ENCODE measurements at regions of chr5 and their contacts with region 1.

Region 1: DNA sequence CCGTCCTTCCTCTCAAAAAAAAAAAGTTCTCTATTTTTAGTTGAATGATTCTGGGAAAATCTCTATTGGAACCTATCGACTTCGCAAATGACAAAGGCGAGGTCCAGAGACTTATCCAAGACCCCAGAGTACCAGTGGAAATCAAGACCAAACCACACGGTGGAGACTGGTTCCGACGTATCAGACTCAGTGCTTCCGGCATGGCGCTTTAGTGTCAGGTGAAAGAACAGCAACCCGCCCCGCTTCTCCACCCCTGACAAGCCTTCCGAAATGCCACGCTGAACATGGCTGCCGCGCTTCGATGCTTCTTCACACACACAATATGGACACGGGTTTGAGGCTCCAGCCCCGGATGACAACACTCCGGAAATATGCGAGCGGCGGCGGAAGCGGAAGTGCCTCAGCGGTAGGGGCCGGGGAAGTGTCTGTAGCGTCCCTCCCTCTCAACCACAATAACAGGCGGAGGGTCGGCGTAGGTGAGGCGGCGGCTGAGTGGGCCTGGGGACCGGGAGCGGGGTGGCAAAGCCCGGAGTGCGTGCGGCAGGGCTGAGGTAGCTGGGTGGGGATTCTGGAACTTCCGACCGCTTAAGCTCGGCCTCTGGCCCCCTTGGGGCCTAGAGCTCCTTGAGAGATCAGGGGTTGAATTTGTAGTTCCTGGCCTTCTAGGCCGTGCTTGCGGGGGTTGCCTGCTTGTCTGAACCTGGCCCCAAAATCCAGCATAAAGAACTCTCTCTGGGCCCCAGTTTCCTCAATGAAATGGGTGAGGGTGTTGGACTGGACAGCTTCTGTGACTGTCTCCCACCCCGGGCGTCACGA is at the start of gene FBXO38:
- DNase-seq: peak; percentile 98
- ATAC-seq: peak; percentile 97
- H3K4me3 Mint-ChIP-seq: peak within 1 kb of the TSS; percentile 94
- H3K27ac Mint-ChIP-seq: peak within 1 kb of the TSS; percentile 99
- H3K4me1 Mint-ChIP-seq: peaks cover 56% of the 10 kb centered on the region
- H3K27me3 Mint-ChIP-seq: no peaks in the 10 kb centered on the region
- total RNA-seq, gene FBXO38: 47.5 to 65.4 TPM

Region 2: DNA sequence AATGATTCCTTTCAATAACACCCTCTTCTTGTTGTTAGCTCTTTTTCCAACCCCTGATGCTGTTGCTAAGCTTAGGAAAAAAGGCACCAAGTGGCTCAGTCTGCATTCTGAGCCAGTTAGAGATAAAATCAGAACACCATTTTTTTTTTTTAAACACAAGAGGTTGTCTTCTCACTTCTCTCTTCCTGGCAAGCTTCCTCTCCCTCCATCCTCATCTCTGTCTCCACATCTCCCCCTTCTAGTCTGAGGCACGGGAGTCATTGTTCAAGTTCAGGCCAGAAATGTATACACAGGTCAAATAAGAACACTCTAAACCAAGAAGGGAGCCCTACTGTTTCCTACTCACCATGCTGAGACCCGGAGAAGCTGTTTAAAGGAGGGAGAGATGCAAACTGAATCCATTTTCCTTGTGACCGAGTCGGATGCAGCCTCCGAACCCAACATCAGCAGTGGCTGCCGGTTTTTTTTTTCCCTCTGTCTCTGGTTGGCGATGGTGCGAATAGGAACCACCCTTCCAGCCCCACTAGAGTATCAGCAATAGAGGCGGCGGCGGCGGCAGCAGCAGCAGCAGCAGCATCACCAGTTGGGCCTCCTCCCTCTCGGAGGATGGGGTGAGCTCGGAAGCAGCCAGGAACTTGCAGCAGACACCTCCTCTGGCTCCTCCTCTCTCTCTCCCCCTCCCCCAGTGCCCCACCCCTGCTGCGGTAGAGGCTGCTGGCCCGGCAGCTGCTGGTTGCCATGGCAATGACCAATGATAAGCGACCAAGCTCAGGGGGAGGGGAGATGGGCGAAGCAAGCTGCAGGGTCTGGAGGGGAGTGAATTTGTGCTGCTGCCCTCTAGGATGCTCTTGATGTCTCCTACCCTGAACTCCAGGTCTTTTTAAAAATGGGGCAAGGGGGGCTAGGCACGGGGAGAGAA is 601.4 kb before region 1 on chr5 and contains the start of gene JAKMIP2:
- CTCF ChIA-PET with region 1: no interaction called
- POLR2A ChIA-PET with region 1: no interaction called
- intact Hi-C with region 1: loop called in 1 of 2 experiments (anchors 1 kb)
- DNase-seq: peak; percentile 93
- ATAC-seq: peak; percentile 98
- H3K4me3 Mint-ChIP-seq: peak within 1 kb of the TSS; percentile 79
- H3K27ac Mint-ChIP-seq: peak within 1 kb of the TSS; percentile 82
- H3K4me1 Mint-ChIP-seq: peaks cover 14% of the 10 kb centered on the region
- H3K27me3 Mint-ChIP-seq: no peaks in the 10 kb centered on the region
- total RNA-seq, gene JAKMIP2: 3.4 to 3.9 TPM

Region 3: GRCh38 chr5:148364343-148364742 is 19.4 kb before region 1 on chr5:
- CTCF ChIA-PET with region 1: no interaction called
- POLR2A ChIA-PET with region 1: no interaction called
- intact Hi-C with region 1: no loop called
- DNase-seq: no peak
- ATAC-seq: no peak
- H3K4me3 Mint-ChIP-seq: no peak overlapping the region
- H3K27ac Mint-ChIP-seq: no peak overlapping the region
- H3K4me1 Mint-ChIP-seq: no peaks in the 10 kb centered on the region
- H3K27me3 Mint-ChIP-seq: peaks cover 2% of the 10 kb centered on the region

Region 4: DNA sequence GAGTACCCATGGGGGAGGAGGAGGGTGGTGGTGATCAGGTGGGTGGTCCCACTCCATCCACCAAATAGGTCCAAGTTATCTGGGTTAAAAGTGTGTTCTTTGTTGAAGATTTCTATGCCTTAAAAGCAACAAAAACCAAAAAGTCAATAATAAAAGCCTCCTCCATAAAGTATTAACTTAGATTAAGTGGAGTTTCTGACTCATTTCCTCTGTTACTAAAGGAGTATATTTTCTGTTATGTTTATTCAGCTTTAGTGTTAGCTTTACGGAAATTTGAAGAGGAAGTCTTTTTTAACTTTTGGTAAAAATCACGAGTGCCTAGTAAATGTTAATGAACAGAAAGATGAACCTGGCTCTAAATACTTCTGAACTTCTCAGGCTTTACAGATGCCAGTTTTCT is 17.8 kb after region 1 on chr5:
- CTCF ChIA-PET with region 1: interaction called, 3 read pairs
- POLR2A ChIA-PET with region 1: no interaction called
- intact Hi-C with region 1: loop called in 1 of 2 experiments (anchors 2 kb)
- DNase-seq: no peak
- ATAC-seq: no peak
- H3K4me3 Mint-ChIP-seq: no peak overlapping the region
- H3K27ac Mint-ChIP-seq: peak overlapping the region; percentile 85
- H3K4me1 Mint-ChIP-seq: peaks cover 46% of the 10 kb centered on the region
- H3K27me3 Mint-ChIP-seq: no peaks in the 10 kb centered on the region

Region 5: GRCh38 chr5:148805326-148806290 is 421.8 kb after region 1 on chr5:
- CTCF ChIA-PET with region 1: no interaction called
- POLR2A ChIA-PET with region 1: no interaction called
- intact Hi-C with region 1: loop called in 1 of 2 experiments (anchors 5 kb)
- DNase-seq: peak; percentile 62
- ATAC-seq: peak; percentile 60
- H3K4me3 Mint-ChIP-seq: no peak overlapping the region
- H3K27ac Mint-ChIP-seq: peak overlapping the region; percentile 21
- H3K4me1 Mint-ChIP-seq: peaks cover 40% of the 10 kb centered on the region
- H3K27me3 Mint-ChIP-seq: peaks cover 17% of the 10 kb centered on the region

Region 6: GRCh38 chr5:149551200-149552037 is 1167.6 kb after region 1 on chr5 and contains the start of gene CSNK1A1:
- CTCF ChIA-PET with region 1: no interaction called
- POLR2A ChIA-PET with region 1: no interaction called
- intact Hi-C with region 1: loop called in 1 of 2 experiments (anchors 2 kb)
- DNase-seq: peak; percentile 100
- ATAC-seq: peak; percentile 90
- H3K4me3 Mint-ChIP-seq: peak within 1 kb of the TSS; percentile 95
- H3K27ac Mint-ChIP-seq: peak within 1 kb of the TSS; percentile 100
- H3K4me1 Mint-ChIP-seq: peaks cover 27% of the 10 kb centered on the region
- H3K27me3 Mint-ChIP-seq: no peaks in the 10 kb centered on the region
- total RNA-seq, gene CSNK1A1: 169 to 203 TPM

Measured in activated CD4-positive, alpha-beta T cell treated with anti-CD3 and anti-CD28 coated beads for 36 hours (primary cell).